Spleen (tissue), 13 donors: ENCODE measurements at regions of chr19 and their contacts with region 1.

Region 1: DNA sequence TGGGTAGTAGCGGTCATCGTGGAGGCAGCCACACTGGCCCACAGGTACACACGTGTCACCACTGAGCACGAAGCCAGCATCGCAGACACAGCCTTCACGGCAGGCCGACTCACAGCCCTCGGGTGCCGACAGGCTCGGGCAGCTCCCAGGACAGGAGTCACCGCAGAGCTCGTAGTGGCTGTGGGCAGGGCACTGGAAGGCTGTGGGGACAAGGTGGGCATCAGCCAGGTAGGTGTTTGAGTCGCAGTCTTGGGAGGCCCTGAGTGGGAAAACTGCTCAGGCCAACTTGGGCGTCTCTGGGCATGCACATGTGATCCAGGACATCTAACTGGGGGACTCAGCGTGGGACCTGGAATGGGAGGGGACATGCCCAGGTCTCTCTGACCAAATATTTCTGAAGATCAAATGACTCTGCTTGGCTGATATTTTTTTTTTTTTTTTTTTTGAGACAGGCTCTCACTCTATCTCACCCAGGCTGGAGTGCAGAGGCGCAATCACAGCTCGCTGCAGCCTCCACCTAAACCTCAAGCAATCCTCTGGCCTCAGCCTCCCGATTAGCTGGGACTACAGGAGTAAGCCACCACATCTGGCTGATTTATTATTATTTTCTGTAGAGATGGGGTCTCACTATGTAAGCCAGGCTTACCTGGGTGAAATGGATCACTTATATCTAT is 43.8 kb upstream of the FBL start:
- DNase-seq: peak; percentile 77
- H3K4me3 ChIP-seq: no peak overlapping the region
- H3K27ac ChIP-seq: no peak overlapping the region
- H3K4me1 ChIP-seq: peaks cover 0 to 17% (median 8%) of the 10 kb centered on the region in 6 donors
- H3K27me3 ChIP-seq: peaks cover 0 to 12% (median 3%) of the 10 kb centered on the region in 7 donors
- CTCF ChIP-seq: no peak
- POLR2A ChIP-seq: no peak

Region 2: DNA sequence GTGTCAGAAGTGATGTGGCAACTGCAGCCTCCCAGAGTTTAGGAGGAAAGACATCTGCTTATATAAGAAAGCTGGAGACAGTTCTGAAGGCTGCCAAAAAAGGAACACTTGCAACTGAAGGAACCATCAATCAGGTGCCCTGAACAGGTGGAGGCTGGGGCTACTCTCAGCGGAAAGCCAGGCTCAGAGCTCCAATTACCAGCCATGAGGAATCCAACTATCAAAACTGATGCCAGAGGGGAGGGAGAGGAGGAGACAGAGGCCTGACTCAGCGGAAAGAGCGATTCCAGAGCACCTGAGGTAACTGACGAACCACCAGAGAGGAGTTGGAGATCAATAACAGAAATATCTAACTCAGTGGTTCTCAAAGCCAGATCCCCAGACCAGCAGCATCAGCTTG is 87.1 kb before region 1 on chr19:
- intact Hi-C with region 1: no loop called
- DNase-seq: no peak
- H3K4me3 ChIP-seq: no peak overlapping the region
- H3K27ac ChIP-seq: no peak overlapping the region
- H3K4me1 ChIP-seq: no peaks in the 10 kb centered on the region
- H3K27me3 ChIP-seq: peaks cover 0 to 25% (median 0%) of the 10 kb centered on the region in 7 donors
- CTCF ChIP-seq: no peak
- POLR2A ChIP-seq: no peak

Region 3: DNA sequence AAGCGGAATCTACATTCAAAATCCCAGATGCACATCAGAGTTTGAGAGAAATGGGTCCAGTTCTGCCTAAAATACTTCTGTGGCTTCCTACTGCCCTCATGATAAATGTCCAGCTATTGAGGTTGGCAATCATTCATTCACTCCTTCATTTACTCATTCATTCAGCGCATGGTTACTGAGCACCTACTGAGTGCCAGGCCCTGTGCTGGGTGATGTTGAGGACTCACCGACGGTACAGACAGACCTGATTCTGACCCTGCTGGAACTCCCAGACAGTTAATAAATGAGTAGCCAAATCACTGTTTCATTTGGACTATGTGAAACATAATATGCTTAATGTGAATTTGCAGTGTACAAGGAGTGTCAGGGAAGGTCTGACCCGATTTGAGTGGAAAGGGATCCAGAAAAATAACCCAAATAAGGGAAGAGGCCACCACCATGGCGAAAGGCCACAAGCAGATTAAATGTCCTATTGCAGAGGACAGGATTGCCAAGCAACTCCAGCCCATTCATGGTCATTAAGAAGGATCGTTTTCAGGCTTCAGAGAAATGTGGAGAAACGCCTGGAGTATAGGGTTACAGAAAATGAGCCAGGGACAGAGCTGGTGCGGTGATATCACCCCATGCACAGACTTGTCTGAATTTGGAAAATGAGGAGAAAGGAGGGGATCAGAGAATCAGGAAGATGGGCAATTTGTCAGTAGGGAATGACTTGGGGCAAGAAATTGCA is 76.6 kb before region 1 on chr19:
- intact Hi-C with region 1: no loop called
- DNase-seq: no peak
- H3K4me3 ChIP-seq: no peak overlapping the region
- H3K27ac ChIP-seq: no peak overlapping the region
- H3K4me1 ChIP-seq: peaks cover 0 to 4% (median 0%) of the 10 kb centered on the region in 6 donors
- H3K27me3 ChIP-seq: no peaks in the 10 kb centered on the region
- CTCF ChIP-seq: no peak
- POLR2A ChIP-seq: no peak

Region 4: GRCh38 chr19:39858541-39858940 is 31.5 kb before region 1 on chr19:
- intact Hi-C with region 1: no loop called
- DNase-seq: peak; percentile 12
- H3K4me3 ChIP-seq: peak overlapping the region in 1 of 8 donors; percentile 39
- H3K27ac ChIP-seq: no peak overlapping the region
- H3K4me1 ChIP-seq: no peaks in the 10 kb centered on the region
- H3K27me3 ChIP-seq: no peaks in the 10 kb centered on the region
- CTCF ChIP-seq: no peak
- POLR2A ChIP-seq: no peak

Region 5: GRCh38 chr19:39970675-39971379 is 80.8 kb after region 1 on chr19 and contains the start of gene PSMC4:
- intact Hi-C with region 1: loop called (anchors 5 kb)
- DNase-seq: peak; percentile 100
- H3K4me3 ChIP-seq: peak within 1 kb of the TSS; percentile 60 to 87 (median 74)
- H3K27ac ChIP-seq: peak within 1 kb of the TSS; percentile 92 to 96 (median 93)
- H3K4me1 ChIP-seq: peaks cover 19 to 48% (median 35%) of the 10 kb centered on the region in 6 donors
- H3K27me3 ChIP-seq: no peaks in the 10 kb centered on the region
- CTCF ChIP-seq: peak; percentile 91 to 99 (median 97)
- POLR2A ChIP-seq: peak; percentile 17 to 69 (median 18)
- total RNA-seq, gene PSMC4: 58.9 to 85.4 (median 65.4) TPM